Activated CD4-positive, alpha-beta T cell treated with anti-CD3 and anti-CD28 coated beads for 36 hours (primary cell): ENCODE measurements at regions of chr2 and their contacts with region 1.

Region 1: GRCh38 chr2:171319164-171319810 is 114.5 kb downstream of the METTL8 start:
- DNase-seq: peak; percentile 78
- ATAC-seq: peak; percentile 80
- H3K4me3 Mint-ChIP-seq: peak overlapping the region; percentile 59
- H3K27ac Mint-ChIP-seq: peak overlapping the region; percentile 98
- H3K4me1 Mint-ChIP-seq: peaks cover 67% of the 10 kb centered on the region
- H3K27me3 Mint-ChIP-seq: no peaks in the 10 kb centered on the region

Region 2: DNA sequence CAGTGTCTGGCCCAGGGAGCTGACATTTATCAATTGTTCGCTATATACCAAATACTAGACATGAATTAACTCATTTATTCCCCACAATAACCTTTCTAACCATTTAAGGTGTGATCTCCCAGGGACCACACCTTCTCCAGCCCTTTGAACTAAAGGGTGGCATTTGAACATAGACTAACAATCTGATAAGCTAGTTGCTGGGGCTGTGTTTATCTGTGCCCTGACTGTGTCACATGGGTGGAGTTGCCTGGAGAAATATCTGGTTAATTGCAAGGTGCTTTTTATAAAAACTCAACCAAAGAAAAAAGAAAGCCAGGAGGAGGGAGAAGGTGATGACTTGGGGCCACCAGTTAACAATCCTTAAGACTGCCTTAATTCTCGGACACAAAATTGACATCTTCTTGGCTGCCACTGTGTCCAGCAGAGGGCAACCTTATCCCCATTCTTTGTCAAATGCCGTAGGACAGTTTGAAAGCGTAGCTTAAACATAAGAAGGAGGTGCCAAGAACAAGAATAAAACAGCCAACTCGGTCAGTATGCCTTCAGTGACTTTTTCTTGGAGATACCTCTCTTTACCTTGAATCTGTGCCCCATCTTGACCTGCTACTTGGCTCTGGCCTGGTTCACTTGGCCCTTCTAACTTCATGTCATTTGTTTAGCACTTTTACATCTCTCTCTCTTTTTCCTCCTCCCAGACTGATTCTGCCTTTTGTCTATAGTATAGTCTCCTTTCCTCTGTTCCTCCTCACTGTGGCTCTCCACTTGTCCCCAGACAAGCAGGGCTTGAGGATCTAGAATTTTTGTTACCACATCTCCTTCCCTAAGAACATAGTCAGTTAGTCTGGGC is 958.0 kb before region 1 on chr2:
- CTCF ChIA-PET with region 1: no interaction called
- POLR2A ChIA-PET with region 1: no interaction called
- intact Hi-C with region 1: loop called in 1 of 2 experiments (anchors 10 kb)
- DNase-seq: peak; percentile 76
- ATAC-seq: peak; percentile 58
- H3K4me3 Mint-ChIP-seq: no peak overlapping the region
- H3K27ac Mint-ChIP-seq: peak overlapping the region; percentile 90
- H3K4me1 Mint-ChIP-seq: peaks cover 29% of the 10 kb centered on the region
- H3K27me3 Mint-ChIP-seq: peaks cover 7% of the 10 kb centered on the region

Region 3: DNA sequence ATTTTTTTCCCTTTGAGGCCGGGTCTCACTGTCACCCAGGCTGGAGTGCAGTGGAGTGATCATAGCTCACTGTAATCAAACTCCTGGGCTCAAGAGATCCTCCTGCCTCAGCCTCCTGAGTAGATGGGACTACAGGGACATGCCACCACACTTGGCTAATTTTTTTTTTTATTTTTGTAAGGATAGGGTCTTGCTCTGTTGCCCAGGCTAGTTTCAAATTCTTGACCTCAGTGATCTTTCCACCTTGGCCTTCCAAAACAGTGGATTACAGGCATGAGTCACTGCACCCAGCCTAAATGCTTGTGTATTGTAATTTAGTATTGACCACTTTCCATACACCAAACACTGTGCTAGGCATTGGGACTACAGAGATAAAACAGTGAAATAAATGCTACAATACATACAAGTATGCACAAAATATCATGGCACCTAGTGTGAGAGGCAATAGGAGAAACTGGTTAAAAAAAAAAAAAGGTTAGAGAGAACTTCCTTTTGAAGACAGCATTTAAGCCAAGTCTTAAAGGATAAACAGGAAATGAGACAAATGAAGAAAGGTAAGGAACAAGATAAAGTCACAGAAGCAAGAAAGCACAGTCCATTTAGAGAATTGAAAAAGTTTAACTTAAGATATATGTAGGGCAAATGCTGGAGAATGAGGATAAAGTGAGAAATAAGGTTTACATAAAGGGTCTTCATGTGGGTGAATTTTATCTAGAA is 276.9 kb before region 1 on chr2:
- CTCF ChIA-PET with region 1: no interaction called
- POLR2A ChIA-PET with region 1: no interaction called
- intact Hi-C with region 1: loop called in 1 of 2 experiments (anchors 5 kb)
- DNase-seq: no peak
- ATAC-seq: no peak
- H3K4me3 Mint-ChIP-seq: no peak overlapping the region
- H3K27ac Mint-ChIP-seq: peak overlapping the region; percentile 87
- H3K4me1 Mint-ChIP-seq: peaks cover 35% of the 10 kb centered on the region
- H3K27me3 Mint-ChIP-seq: no peaks in the 10 kb centered on the region

Region 4: DNA sequence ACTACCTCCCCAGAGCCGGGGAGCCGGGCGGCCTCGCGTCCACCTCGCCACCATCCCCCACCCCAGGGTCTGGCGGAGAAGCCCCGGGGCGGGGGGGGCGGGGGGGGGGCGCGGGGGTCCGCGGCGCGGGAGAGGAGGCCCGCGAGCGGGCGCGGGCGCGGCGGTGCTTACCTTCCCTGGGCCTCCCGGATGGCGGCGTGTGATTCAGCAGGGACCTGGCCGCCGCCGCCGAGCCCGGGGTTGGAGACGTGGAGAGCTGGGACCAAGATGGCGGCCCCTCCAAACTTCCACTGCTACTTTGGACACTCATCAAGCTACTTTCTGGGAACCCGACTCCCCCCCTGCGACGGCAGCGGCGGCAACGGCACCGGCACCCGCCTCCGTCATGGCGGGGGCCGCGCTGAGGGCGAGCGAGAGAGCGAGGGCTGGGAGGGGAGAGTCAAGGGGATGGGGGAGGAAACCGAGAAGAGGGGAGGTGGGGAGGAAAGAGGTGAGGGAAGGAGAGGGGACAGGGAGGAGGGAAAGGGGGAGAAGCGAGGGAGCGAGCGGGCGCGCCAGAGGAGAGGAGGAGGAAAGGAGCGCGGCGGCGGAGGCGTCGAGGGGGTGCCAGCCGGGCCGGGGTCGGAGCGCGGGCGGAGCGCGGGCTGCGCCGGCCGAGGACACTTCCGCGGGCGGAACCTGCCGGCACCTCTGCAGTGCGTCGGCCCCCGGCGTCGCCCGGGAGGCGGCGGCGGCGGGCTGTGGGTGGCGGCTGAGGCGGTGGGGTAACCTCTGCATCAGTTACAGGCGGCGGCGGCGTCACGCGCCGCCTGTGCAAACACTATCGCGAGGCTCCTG is 158.9 kb before region 1 on chr2 and contains the start of gene TLK1:
- CTCF ChIA-PET with region 1: interaction called, 3 read pairs
- POLR2A ChIA-PET with region 1: interaction called, 4 read pairs
- intact Hi-C with region 1: loop called (anchors 1 kb)
- DNase-seq: peak; percentile 87
- ATAC-seq: peak; percentile 64
- H3K4me3 Mint-ChIP-seq: peak within 1 kb of the TSS; percentile 95
- H3K27ac Mint-ChIP-seq: peak within 1 kb of the TSS; percentile 98
- H3K4me1 Mint-ChIP-seq: peaks cover 59% of the 10 kb centered on the region
- H3K27me3 Mint-ChIP-seq: no peaks in the 10 kb centered on the region
- total RNA-seq, gene TLK1: 71.8 to 83.7 TPM

Region 5: GRCh38 chr2:171260471-171261424 is 58.5 kb before region 1 on chr2:
- CTCF ChIA-PET with region 1: interaction called, 21 read pairs
- POLR2A ChIA-PET with region 1: interaction called, 9 read pairs
- intact Hi-C with region 1: loop called (anchors 1 kb)
- DNase-seq: peak; percentile 50
- ATAC-seq: peak; percentile 90
- H3K4me3 Mint-ChIP-seq: peak overlapping the region; percentile 34
- H3K27ac Mint-ChIP-seq: peak overlapping the region; percentile 64
- H3K4me1 Mint-ChIP-seq: peaks cover 34% of the 10 kb centered on the region
- H3K27me3 Mint-ChIP-seq: no peaks in the 10 kb centered on the region

Region 6: DNA sequence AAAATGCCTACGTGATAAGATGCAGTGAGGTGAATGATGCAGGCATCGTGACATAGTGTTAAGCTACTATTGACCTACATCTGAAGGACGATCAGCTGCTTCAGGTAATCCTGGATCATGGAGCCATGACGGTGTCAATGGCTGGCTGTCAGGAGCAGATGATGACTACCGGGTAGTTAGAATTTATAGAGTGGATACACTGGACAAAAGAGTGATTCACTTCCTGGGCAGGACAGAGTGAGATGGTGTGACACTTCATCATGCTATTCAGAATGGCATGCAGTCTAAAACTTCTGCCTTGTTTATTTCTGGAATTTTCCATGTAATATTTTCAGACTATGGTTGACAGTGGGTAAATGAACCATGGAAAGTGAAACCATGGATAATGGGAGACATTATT is 85.0 kb after region 1 on chr2:
- CTCF ChIA-PET with region 1: no interaction called
- POLR2A ChIA-PET with region 1: interaction called, 4 read pairs
- intact Hi-C with region 1: loop called in 1 of 2 experiments (anchors 1 kb)
- DNase-seq: no peak
- ATAC-seq: no peak
- H3K4me3 Mint-ChIP-seq: no peak overlapping the region
- H3K27ac Mint-ChIP-seq: no peak overlapping the region
- H3K4me1 Mint-ChIP-seq: peaks cover 36% of the 10 kb centered on the region
- H3K27me3 Mint-ChIP-seq: no peaks in the 10 kb centered on the region

Region 7: GRCh38 chr2:172253190-172254052 is 934.1 kb after region 1 on chr2:
- CTCF ChIA-PET with region 1: no interaction called
- POLR2A ChIA-PET with region 1: no interaction called
- intact Hi-C with region 1: loop called in 1 of 2 experiments (anchors 5 kb)
- DNase-seq: peak; percentile 91
- ATAC-seq: peak; percentile 96
- H3K4me3 Mint-ChIP-seq: no peak overlapping the region
- H3K27ac Mint-ChIP-seq: peak overlapping the region; percentile 40
- H3K4me1 Mint-ChIP-seq: peaks cover 36% of the 10 kb centered on the region
- H3K27me3 Mint-ChIP-seq: peaks cover 9% of the 10 kb centered on the region